ENCODE measurements at regions of chr17 and their contacts with region 1.

Region 1: GRCh38 chr17:75904749-75905521 is at the start of gene MRPL38:
- DNase-seq: peak; percentile 96
- H3K4me3 ChIP-seq: peak within 1 kb of the TSS; percentile 78 to 95 (median 79)
- H3K27ac ChIP-seq: peak within 1 kb of the TSS; percentile 51
- H3K4me1 ChIP-seq: peaks cover 20% of the 10 kb centered on the region
- H3K27me3 ChIP-seq: no peaks in the 10 kb centered on the region
- CTCF ChIP-seq: peak; percentile 54 to 96
- total RNA-seq, gene MRPL38: 24.0 to 67.6 TPM

Region 2: GRCh38 chr17:75589012-75589918 is 315.7 kb before region 1 on chr17:
- CTCF ChIA-PET with region 1: no interaction called
- dilution Hi-C with region 1: no loop called
- in situ Hi-C with region 1: no loop called
- intact Hi-C with region 1: no loop called
- DNase-seq: peak; percentile 64
- H3K4me3 ChIP-seq: peak overlapping the region; percentile 41 to 65 (median 46)
- H3K27ac ChIP-seq: no peak overlapping the region
- H3K4me1 ChIP-seq: peaks cover 6% of the 10 kb centered on the region
- H3K27me3 ChIP-seq: peaks cover 4% of the 10 kb centered on the region
- CTCF ChIP-seq: peak in 1 of 2 donors; percentile 30

Region 3: GRCh38 chr17:75877752-75878173 is 27.2 kb before region 1 on chr17:
- CTCF ChIA-PET with region 1: no interaction called
- dilution Hi-C with region 1: no loop called
- in situ Hi-C with region 1: no loop called
- intact Hi-C with region 1: loop called (anchors 1 kb)
- DNase-seq: peak; percentile 76
- H3K4me3 ChIP-seq: peak overlapping the region; percentile 64 to 67 (median 65)
- H3K27ac ChIP-seq: peak overlapping the region; percentile 76
- H3K4me1 ChIP-seq: peaks cover 34% of the 10 kb centered on the region
- H3K27me3 ChIP-seq: no peaks in the 10 kb centered on the region
- CTCF ChIP-seq: peak; percentile 30 to 64

Region 4: DNA sequence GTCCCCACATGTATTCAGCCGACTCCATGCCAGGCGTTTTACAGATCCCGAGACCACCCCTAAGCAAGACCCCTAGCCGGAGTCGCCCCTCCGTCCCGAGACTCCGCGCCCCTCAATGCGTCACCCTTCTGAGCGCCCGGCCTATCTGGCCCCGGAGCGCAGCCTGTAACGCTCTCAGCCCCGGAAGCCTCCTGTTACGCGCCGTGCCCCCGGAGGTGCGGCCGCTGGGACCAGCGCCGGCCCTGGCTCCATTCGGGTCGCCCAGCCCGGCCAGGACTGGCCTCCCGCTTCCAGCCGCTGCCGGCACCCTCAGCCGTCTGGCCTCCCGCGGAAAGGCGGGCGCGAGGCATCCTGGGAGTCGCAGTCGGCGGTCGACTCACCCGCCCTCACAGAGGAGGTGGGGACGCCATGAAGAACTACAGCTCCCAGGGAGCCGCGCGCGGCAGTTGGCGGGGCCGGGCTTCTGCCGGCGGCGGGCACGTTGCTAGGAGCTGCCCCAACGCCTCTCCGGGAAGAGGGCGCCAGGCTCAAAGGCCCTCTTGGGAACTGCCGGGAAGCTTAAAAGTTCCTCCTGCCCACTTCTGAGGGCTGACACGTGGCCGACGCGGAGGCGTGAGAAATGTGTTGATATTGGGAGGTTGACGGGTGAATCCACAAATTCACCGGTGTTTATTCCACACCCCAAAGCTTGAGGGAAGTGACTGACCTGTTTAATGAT is 35.9 kb after region 1 on chr17 and contains the start of gene FBF1:
- CTCF ChIA-PET with region 1: no interaction called
- dilution Hi-C with region 1: loop called (anchors 5 kb)
- in situ Hi-C with region 1: no loop called
- intact Hi-C with region 1: loop called (anchors 1 kb)
- DNase-seq: peak; percentile 96
- H3K4me3 ChIP-seq: peak within 1 kb of the TSS; percentile 73 to 93 (median 87)
- H3K27ac ChIP-seq: peak within 1 kb of the TSS; percentile 60
- H3K4me1 ChIP-seq: peaks cover 3% of the 10 kb centered on the region
- H3K27me3 ChIP-seq: no peaks in the 10 kb centered on the region
- CTCF ChIP-seq: no peak
- total RNA-seq, gene FBF1: 12.0 to 13.5 TPM

Region 5: DNA sequence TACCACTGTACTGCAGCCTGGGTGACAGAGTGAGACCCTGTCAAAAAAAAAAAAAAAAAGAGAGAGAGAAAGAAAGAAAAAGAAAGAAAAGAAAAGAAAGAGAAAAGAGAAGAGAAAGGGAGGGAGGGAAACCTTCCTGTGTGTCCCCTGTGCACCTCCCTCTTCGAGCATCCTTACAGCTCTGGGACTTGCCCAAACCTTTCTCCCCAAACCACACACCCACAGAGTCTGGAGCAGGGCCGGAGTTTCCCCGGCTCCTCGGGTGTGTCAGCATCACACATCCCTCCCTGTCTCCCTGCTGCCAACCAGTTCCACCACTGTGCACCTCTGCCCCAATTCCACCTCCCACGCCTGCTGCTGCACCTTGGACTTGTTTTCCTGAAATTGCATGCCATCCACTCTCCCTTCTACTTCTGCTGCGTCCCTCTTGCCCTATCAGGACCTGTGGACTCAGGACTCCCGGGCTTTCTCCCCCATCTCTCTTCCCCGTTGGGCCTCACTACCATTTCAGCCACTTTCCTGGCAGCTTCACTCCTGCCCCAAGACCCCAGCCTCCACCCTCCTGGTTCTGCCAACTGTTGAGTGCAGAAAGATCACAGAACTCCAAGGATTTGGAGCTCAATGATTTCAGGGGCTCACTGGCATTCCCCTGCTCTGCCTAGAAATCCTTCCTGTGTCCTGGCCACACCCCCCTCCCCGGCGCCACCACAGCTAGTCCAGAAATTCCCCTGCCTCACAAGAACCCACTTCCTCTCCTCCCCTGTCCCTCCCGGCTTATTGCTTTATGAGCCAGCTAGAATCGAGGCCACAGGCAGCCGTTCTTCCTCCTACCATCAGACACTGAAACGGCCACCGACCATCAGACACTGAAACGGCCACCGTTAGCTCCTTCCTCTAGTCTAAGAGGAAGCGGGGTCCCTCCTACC is 92.0 kb after region 1 on chr17:
- CTCF ChIA-PET with region 1: interaction called, 11 read pairs
- dilution Hi-C with region 1: no loop called
- in situ Hi-C with region 1: no loop called
- intact Hi-C with region 1: loop called (anchors 2 kb)
- DNase-seq: peak; percentile 97
- H3K4me3 ChIP-seq: peak overlapping the region in 1 of 3 experiments; percentile 18
- H3K27ac ChIP-seq: peak overlapping the region; percentile 91
- H3K4me1 ChIP-seq: peaks cover 23% of the 10 kb centered on the region
- H3K27me3 ChIP-seq: no peaks in the 10 kb centered on the region
- CTCF ChIP-seq: no peak

Region 6: GRCh38 chr17:76072148-76072858 is 167.4 kb after region 1 on chr17 and contains the start of gene SRP68:
- CTCF ChIA-PET with region 1: no interaction called
- dilution Hi-C with region 1: no loop called
- in situ Hi-C with region 1: no loop called
- intact Hi-C with region 1: loop called (anchors 2 kb)
- DNase-seq: peak; percentile 93
- H3K4me3 ChIP-seq: peak within 1 kb of the TSS; percentile 62 to 97 (median 86)
- H3K27ac ChIP-seq: peak within 1 kb of the TSS; percentile 87
- H3K4me1 ChIP-seq: peaks cover 37% of the 10 kb centered on the region
- H3K27me3 ChIP-seq: peaks cover 36% of the 10 kb centered on the region
- CTCF ChIP-seq: no peak
- total RNA-seq, gene SRP68: 24.5 to 102 TPM

Region 7: GRCh38 chr17:76262732-76263344 is 357.9 kb after region 1 on chr17:
- CTCF ChIA-PET with region 1: no interaction called
- dilution Hi-C with region 1: no loop called
- in situ Hi-C with region 1: no loop called
- intact Hi-C with region 1: no loop called
- DNase-seq: peak; percentile 44
- H3K4me3 ChIP-seq: no peak overlapping the region
- H3K27ac ChIP-seq: peak overlapping the region; percentile 21
- H3K4me1 ChIP-seq: peaks cover 47% of the 10 kb centered on the region
- H3K27me3 ChIP-seq: no peaks in the 10 kb centered on the region
- CTCF ChIP-seq: no peak

Region 8: GRCh38 chr17:76278952-76279741 is 374.2 kb after region 1 on chr17:
- CTCF ChIA-PET with region 1: no interaction called
- dilution Hi-C with region 1: no loop called
- in situ Hi-C with region 1: loop called in 1 of 2 experiments (anchors 25 kb)
- intact Hi-C with region 1: loop called (anchors 10 kb)
- DNase-seq: peak; percentile 51
- H3K4me3 ChIP-seq: no peak overlapping the region
- H3K27ac ChIP-seq: no peak overlapping the region
- H3K4me1 ChIP-seq: peaks cover 4% of the 10 kb centered on the region
- H3K27me3 ChIP-seq: no peaks in the 10 kb centered on the region
- CTCF ChIP-seq: peak; percentile 72 to 99

Region 9: DNA sequence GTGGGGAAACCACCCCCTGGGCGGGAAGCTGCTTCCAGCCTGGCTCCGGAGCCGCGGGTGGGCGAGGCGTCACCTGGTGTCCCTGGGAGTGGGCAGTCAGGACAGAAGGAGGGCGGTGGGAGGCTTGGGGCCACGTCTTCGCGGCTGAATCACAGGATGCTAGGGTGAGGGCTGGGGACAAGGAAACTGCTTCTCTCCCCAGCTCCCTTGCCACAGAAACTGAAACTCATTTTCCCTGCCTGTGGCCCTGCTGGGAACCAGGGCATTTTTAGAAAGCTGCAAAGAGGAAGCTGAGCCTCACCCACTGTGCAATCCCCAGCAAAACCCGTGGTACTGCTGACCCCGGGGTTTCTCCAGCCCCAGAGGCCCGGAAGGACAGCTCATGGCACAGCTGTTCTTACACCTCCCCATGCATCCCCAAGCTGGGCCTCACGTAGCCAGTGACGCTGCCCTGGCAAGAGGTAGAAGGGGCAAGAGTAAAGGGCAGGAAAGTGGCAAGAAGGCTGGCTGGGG is 588.1 kb after region 1 on chr17:
- CTCF ChIA-PET with region 1: no interaction called
- dilution Hi-C with region 1: no loop called
- in situ Hi-C with region 1: no loop called
- intact Hi-C with region 1: no loop called
- DNase-seq: peak; percentile 81
- H3K4me3 ChIP-seq: no peak overlapping the region
- H3K27ac ChIP-seq: no peak overlapping the region
- H3K4me1 ChIP-seq: peaks cover 21% of the 10 kb centered on the region
- H3K27me3 ChIP-seq: no peaks in the 10 kb centered on the region
- CTCF ChIP-seq: no peak

Measured in mammary epithelial cell (primary cell).